Activated naive CD4-positive, alpha-beta T cell treated with anti-CD3 and anti-CD28 coated beads, Interleukin-2, amount 10 ng/mL, durations not matched to agents 7 days and 5 days (primary cell): ENCODE measurements at regions of chr11 and their contacts with region 1.

Region 1: DNA sequence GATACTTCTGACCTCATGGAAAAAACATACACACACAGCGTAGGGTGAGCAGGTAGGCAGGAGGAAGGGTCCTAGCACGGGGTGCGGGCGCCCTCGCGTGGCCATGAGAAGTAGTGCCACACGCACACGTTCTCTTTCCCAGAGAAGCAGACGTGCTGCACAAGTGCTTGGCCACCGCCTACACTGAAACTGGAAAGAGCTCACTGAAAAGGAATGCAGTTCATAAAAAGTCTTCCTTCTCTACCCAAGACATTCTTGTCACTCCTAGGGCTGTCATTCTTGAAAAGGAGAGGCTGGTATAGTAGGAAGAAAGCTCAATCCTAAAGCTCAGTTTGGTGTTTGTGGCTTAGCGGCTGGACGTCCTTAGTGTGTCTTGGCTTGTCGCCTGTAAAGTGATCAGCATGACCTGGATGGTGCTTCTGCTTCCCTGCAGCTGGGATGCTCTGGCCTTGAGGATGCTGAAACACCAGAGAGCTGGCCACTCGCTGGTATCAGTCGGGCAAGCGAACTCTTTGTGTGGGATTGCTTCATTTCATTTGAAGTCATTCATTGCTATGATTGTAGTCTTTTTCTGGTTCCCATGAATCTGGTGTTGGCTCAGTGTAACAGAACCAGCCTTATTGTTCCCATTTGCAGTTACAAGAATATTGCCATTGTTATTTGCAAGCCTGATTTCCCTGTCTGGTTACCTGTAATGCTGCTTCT is 303.8 kb downstream of the NTM start:
- DNase-seq: peak; percentile 62
- H3K4me3 Mint-ChIP-seq: no peak overlapping the region
- H3K27ac Mint-ChIP-seq: no peak overlapping the region
- H3K4me1 Mint-ChIP-seq: no peaks in the 10 kb centered on the region
- H3K27me3 Mint-ChIP-seq: peaks cover 3% of the 10 kb centered on the region

Region 2: GRCh38 chr11:131064373-131064991 is 609.7 kb before region 1 on chr11:
- CTCF ChIA-PET with region 1: interaction called, 24 read pairs
- DNase-seq: peak; percentile 35
- H3K4me3 Mint-ChIP-seq: no peak overlapping the region
- H3K27ac Mint-ChIP-seq: no peak overlapping the region
- H3K4me1 Mint-ChIP-seq: no peaks in the 10 kb centered on the region
- H3K27me3 Mint-ChIP-seq: no peaks in the 10 kb centered on the region

Region 3: DNA sequence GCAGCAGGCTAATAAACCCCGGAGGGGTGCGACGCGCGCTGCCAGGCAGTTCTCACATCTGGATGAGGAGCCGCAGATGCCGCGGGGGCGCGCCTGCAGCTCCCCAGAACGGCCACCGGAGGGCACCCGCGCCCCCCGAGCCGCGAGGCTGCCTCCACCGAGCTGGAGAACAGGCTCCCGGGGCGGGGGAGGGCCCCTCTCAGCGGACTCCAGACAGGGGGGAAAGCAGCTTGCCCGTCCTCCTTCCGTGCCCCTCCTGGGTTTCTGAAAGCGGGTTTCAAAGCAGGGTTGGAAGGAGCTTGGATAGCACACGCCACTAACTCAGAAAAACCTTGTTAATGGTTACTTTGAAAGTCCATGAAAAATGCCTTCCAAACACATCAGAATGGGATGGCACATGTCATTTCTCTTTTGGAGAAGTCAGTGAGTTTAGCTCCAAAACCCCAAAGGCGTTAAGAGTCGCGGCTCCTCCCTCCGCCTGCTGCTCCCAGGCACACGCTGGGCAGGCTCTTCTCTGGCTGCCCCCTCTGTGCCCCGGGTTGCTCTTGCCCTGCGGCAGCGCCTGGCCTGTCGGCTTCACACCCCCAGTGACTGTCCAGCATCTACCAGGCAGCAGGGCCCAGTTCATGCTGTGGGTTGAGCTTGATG is 14.0 kb after region 1 on chr11:
- CTCF ChIA-PET with region 1: interaction called, 14 read pairs
- DNase-seq: peak; percentile 43
- H3K4me3 Mint-ChIP-seq: no peak overlapping the region
- H3K27ac Mint-ChIP-seq: no peak overlapping the region
- H3K4me1 Mint-ChIP-seq: no peaks in the 10 kb centered on the region
- H3K27me3 Mint-ChIP-seq: peaks cover 13% of the 10 kb centered on the region